Motor neuron (in vitro differentiated cells): ENCODE measurements at regions of chr3 and their contacts with region 1.

Region 1: GRCh38 chr3:193564012-193564411 is 9.3 kb upstream of the ATP13A4 start:
- ATAC-seq: peak in 4 of 8 experiments; percentile 46 to 75 (median 51)
- H3K4me3 ChIP-seq: no peak overlapping the region
- H3K27ac ChIP-seq: no peak overlapping the region
- H3K4me1 ChIP-seq: no peaks in the 10 kb centered on the region

Region 2: DNA sequence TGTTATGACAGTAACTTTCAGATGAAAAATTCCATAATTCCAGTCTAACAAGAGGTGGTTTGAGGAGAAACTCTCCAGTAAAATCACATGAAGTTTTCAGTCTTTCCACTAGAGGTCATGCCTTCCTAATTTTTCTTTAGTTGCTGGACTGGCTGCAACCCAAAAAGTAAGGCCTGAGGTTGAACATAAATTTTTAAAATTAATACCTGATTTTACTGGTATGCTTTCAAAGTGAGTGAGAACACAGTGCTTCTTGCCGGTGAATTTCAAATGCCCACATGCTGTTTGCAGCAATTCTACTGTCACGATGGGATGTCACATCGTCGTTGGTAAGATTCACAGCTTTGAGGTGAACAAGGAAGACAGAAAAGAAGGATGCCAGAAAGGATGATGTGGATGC is 747.7 kb before region 1 on chr3:
- in situ Hi-C with region 1: loop called in 6 of 9 experiments (anchors 10 to 25 kb)
- ATAC-seq: peak in 3 of 8 experiments; percentile 29 to 61 (median 31)
- H3K4me3 ChIP-seq: no peak overlapping the region
- H3K27ac ChIP-seq: no peak overlapping the region
- H3K4me1 ChIP-seq: peaks cover 33 to 47% of the 10 kb centered on the region in 2 donors

Region 3: GRCh38 chr3:193465992-193466608 is 97.9 kb before region 1 on chr3:
- in situ Hi-C with region 1: loop called in 3 of 9 experiments (anchors 10 to 25 kb)
- ATAC-seq: no peak
- H3K4me3 ChIP-seq: no peak overlapping the region
- H3K27ac ChIP-seq: no peak overlapping the region
- H3K4me1 ChIP-seq: no peaks in the 10 kb centered on the region

Region 4: DNA sequence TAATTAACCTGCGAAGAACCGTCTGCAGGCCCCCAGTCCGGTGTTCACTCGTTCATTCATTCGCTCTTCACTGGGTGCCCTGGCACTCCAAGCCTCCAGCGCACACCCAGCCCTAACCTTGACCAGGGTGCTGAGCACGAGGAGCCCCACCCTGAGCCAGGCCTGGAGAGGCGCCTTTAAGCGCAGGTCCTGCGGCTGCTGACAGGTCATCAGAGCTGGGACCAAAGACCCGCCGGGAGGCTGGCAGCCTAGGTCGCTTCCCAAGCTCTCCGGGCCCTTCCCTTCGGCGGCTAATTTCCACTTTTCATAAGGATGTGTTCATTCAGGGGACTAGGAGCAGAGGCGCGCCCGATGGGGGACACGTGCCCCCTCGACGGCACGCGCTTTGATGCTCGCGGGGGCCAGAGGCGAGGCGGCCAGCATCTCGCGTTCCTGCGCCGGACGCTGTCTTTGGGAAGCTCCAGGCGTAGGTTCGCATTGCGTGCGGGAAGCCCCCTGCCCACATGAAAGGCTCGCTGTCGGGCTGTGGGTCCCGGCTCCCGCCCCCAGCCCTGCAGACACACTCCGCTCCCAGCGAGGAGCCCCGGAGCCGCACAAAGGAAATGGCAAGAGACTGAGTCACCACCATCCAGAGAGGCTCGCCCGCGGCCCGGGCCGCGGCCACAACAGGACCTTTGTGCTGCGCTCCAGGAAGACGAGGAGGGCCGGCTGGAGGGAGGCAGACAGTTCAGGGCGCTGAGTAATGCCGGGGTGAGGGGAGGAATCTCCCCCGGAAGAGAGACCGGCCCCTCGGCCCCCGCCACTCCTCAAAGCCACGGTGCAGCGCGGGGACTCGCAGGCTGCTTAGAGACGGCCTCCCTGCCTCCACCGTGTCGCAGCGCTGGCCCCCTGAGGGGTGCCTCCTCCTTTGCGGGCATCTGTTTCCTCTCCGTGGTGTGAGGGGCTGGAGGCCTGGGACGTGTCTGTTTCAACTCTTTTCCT is 305.5 kb after region 1 on chr3:
- in situ Hi-C with region 1: no loop called
- ATAC-seq: peak in 6 of 8 experiments; percentile 82 to 97 (median 95)
- H3K4me3 ChIP-seq: no peak overlapping the region
- H3K27ac ChIP-seq: peak overlapping the region in 1 of 2 donors; percentile 1
- H3K4me1 ChIP-seq: peaks cover 0 to 13% of the 10 kb centered on the region in 2 donors